Gastrocnemius medialis (tissue), 4 donors: ENCODE measurements at regions of chr16 and their contacts with region 1.

Region 1: DNA sequence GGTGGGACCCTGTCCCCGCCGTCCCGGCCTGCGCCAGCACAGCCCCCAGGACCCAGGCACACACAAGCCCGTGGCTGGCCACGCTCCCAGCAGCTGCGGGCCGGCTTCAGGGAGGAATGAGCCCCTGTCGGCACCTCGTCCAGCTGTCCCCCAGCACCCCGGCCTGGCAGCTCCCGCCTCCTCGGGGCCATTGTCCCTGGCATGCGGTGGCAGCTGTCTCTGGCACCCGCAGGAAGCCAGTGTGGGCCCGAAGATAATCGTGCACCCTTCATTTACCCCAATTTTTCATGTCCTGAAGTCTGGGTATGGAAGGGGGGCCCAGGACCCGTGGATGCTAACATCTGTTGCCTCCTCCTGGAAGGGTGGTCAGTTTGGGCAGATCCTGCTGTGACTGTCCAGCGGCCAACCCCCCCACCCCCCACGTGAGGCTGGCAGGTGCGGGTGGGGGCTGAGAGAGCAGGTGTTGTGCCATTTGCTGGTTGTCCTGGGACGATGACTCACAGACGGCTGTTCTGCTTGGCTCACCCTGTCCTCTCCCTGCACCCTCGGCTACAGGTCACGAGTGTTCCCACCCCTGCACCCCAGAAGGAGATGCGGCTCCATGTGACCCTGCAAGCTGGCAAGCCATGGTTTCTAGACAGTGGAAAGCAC is 4.0 kb upstream of the LMF1 start:
- DNase-seq: peak; percentile 82 to 96
- ATAC-seq: peak; percentile 60 to 65
- H3K4me3 ChIP-seq: peak overlapping the region in 3 of 4 donors; percentile 2 to 36 (median 30)
- H3K27ac ChIP-seq: peak overlapping the region; percentile 68 to 85 (median 80)
- H3K4me1 ChIP-seq: peaks cover 5 to 21% of the 10 kb centered on the region in 2 donors
- H3K27me3 ChIP-seq: peaks cover 33 to 41% (median 35%) of the 10 kb centered on the region in 3 donors
- CTCF ChIP-seq: no peak
- POLR2A ChIP-seq: no peak

Region 2: GRCh38 chr16:901715-902601 is 72.8 kb before region 1 on chr16:
- in situ Hi-C with region 1: no loop called
- intact Hi-C with region 1: no loop called
- DNase-seq: no peak
- ATAC-seq: no peak
- H3K4me3 ChIP-seq: no peak overlapping the region
- H3K27ac ChIP-seq: no peak overlapping the region
- H3K4me1 ChIP-seq: no peaks in the 10 kb centered on the region
- H3K27me3 ChIP-seq: no peaks in the 10 kb centered on the region
- CTCF ChIP-seq: no peak
- POLR2A ChIP-seq: no peak

Region 3: DNA sequence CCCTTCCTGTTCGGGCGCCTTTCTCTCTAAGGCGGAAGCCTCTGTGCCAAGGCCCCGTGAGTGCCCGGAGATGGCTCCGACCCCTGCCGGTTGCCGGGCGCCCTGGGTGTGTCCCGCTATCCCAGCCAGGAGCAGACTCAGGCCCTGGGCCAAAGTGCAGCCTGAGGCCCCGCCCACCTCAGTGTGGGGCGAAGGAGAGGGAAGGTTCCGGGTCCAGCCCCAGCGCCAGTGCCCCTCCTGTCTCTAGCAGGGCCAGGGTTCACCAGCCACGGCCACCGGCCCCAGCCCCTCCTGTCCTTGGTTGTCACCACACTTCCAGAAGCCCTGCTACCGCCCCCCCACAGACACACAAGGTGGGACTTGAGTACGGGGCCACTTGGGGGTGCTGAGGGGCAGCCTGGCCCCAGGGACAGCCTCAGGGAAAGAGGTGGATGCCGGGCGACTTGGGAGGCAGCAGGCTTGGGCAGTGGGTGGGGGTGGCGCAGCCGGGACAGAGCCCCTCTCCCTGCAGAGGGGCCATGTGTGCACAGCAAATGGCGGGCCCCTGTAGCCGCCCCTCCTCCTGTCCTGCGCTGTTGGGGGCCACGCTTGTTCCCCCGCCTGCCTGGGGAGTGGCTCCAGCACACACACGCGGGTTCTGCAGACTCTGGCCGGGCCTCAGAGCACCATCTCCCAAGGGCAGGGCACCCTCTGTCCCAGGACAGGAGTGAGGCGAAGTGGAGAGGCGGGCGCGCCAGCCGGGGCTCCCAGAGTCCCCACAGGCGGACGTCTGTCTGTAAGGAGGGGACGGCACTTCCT is 115.3 kb after region 1 on chr16:
- in situ Hi-C with region 1: no loop called
- intact Hi-C with region 1: loop called (anchors 2 kb)
- DNase-seq: peak; percentile 48 to 90
- ATAC-seq: peak; percentile 66 to 71
- H3K4me3 ChIP-seq: peak overlapping the region; percentile 48 to 55 (median 52)
- H3K27ac ChIP-seq: peak overlapping the region; percentile 76 to 92 (median 88)
- H3K4me1 ChIP-seq: peaks cover 13 to 20% of the 10 kb centered on the region in 2 donors
- H3K27me3 ChIP-seq: peaks cover 25 to 36% (median 34%) of the 10 kb centered on the region in 3 donors
- CTCF ChIP-seq: peak; percentile 23 to 34 (median 30)
- POLR2A ChIP-seq: peak; percentile 67 to 72